GM12878 (cell line): ENCODE measurements at regions of chr15 and their contacts with region 1.

Region 1: GRCh38 chr15:79901958-79902357 is 5.1 kb upstream of the MTHFS start:
- DNase-seq: peak; percentile 90
- ATAC-seq: peak; percentile 42
- H3K4me3 ChIP-seq: no peak overlapping the region
- H3K27ac ChIP-seq: peak overlapping the region; percentile 36
- H3K4me1 ChIP-seq: peaks cover 33% of the 10 kb centered on the region
- H3K27me3 ChIP-seq: no peaks in the 10 kb centered on the region
- CTCF ChIP-seq: peak in 1 of 3 experiments; percentile 9; a peak in 1 of 6 replicates
- EP300 ChIP-seq: no peak
- POLR2A ChIP-seq: no peak
- RAD21 ChIP-seq: no peak

Region 2: DNA sequence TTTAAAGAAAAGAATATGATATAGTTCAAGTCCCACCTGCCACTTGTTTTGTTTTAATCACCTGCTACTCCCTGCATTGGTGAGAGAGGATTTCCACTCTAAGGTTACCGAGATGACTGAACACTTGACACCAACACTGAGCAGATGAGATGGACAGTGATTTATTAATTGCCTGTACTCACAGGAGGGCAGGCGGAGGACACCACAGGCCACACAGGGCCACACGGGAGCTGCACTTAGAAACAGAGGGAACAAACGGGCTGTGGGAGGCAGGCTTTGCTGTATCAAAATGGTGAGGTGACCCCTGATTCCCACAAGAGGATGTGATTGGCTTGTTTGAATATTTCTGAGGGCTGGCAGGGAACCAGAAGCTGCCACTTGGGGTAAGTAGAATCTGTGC is 459.0 kb before region 1 on chr15:
- CTCF ChIA-PET with region 1: no interaction called
- POLR2A ChIA-PET with region 1: no interaction called
- RAD21 ChIA-PET with region 1: no interaction called
- SMC1A ChIA-PET with region 1: no interaction called
- in situ Hi-C with region 1: no loop called
- intact Hi-C with region 1: no loop called
- DNase-seq: no peak
- ATAC-seq: no peak
- H3K4me3 ChIP-seq: no peak overlapping the region
- H3K27ac ChIP-seq: no peak overlapping the region
- H3K4me1 ChIP-seq: no peaks in the 10 kb centered on the region
- H3K27me3 ChIP-seq: no peaks in the 10 kb centered on the region
- CTCF ChIP-seq: no peak
- EP300 ChIP-seq: no peak
- POLR2A ChIP-seq: no peak
- RAD21 ChIP-seq: no peak

Region 3: GRCh38 chr15:79874245-79874644 is 27.7 kb before region 1 on chr15:
- CTCF ChIA-PET with region 1: no interaction called
- POLR2A ChIA-PET with region 1: no interaction called
- RAD21 ChIA-PET with region 1: no interaction called
- SMC1A ChIA-PET with region 1: no interaction called
- in situ Hi-C with region 1: no loop called
- intact Hi-C with region 1: no loop called
- DNase-seq: no peak
- ATAC-seq: no peak
- H3K4me3 ChIP-seq: no peak overlapping the region
- H3K27ac ChIP-seq: no peak overlapping the region
- H3K4me1 ChIP-seq: no peaks in the 10 kb centered on the region
- H3K27me3 ChIP-seq: no peaks in the 10 kb centered on the region
- CTCF ChIP-seq: no peak
- EP300 ChIP-seq: no peak
- POLR2A ChIP-seq: no peak
- RAD21 ChIP-seq: no peak

Region 4: DNA sequence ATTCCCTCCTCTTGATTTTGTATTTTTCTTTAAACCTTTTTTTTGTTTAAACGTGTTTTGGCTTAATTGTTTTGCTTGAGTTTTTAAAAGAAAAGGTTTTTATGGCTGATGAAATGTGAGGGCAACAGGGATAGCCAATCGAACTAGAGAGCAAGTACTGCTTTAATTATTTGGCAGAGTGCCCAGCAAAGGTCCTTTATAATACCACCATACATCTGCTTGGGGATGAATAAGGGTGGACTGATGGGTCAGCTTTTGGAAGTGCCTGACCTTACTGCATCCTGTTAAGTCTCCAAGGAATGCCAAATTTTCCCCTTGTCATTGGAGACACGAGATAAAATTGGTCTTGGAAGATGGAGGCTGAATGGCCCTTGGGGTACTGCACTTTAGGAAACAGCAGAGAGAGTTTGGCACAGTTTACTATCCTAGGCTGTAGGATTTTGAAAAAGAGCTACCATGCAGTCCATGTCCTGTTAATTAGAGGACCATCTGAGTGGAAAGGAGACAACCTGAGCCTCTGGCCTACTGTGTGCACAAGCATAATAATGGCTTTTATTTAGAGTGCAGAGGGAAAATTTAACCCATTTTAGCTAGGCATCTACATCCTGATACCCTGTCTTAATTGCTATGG is 14.7 kb after region 1 on chr15:
- CTCF ChIA-PET with region 1: interaction called, 8 read pairs
- POLR2A ChIA-PET with region 1: interaction called, 21 read pairs
- RAD21 ChIA-PET with region 1: interaction called, 16 read pairs
- SMC1A ChIA-PET with region 1: interaction called, 31 read pairs
- in situ Hi-C with region 1: no loop called
- intact Hi-C with region 1: no loop called
- DNase-seq: no peak
- ATAC-seq: no peak
- H3K4me3 ChIP-seq: no peak overlapping the region
- H3K27ac ChIP-seq: no peak overlapping the region
- H3K4me1 ChIP-seq: no peaks in the 10 kb centered on the region
- H3K27me3 ChIP-seq: no peaks in the 10 kb centered on the region
- CTCF ChIP-seq: no peak
- EP300 ChIP-seq: no peak
- POLR2A ChIP-seq: no peak
- RAD21 ChIP-seq: no peak